Gastrocnemius medialis (tissue), 4 donors: ENCODE measurements at regions of chr18 and their contacts with region 1.

Region 1: GRCh38 chr18:47863041-47863440 is 67.4 kb downstream of the SMAD2 start:
- DNase-seq: peak; percentile 43 to 62
- ATAC-seq: peak; percentile 98
- H3K4me3 ChIP-seq: no peak overlapping the region
- H3K27ac ChIP-seq: peak overlapping the region; percentile 7 to 27 (median 12)
- H3K4me1 ChIP-seq: peaks cover 28 to 31% of the 10 kb centered on the region in 2 donors
- H3K27me3 ChIP-seq: no peaks in the 10 kb centered on the region
- CTCF ChIP-seq: no peak
- POLR2A ChIP-seq: no peak

Region 2: GRCh38 chr18:45993389-45993788 is 1869.7 kb before region 1 on chr18:
- in situ Hi-C with region 1: no loop called
- intact Hi-C with region 1: no loop called
- DNase-seq: no peak
- ATAC-seq: no peak
- H3K4me3 ChIP-seq: no peak overlapping the region
- H3K27ac ChIP-seq: no peak overlapping the region
- H3K4me1 ChIP-seq: no peaks in the 10 kb centered on the region
- H3K27me3 ChIP-seq: no peaks in the 10 kb centered on the region
- CTCF ChIP-seq: no peak
- POLR2A ChIP-seq: no peak

Region 3: GRCh38 chr18:47912343-47912742 is 49.3 kb after region 1 on chr18:
- in situ Hi-C with region 1: no loop called
- intact Hi-C with region 1: loop called (anchors 5 kb)
- DNase-seq: no peak
- ATAC-seq: peak; percentile 47 to 61
- H3K4me3 ChIP-seq: no peak overlapping the region
- H3K27ac ChIP-seq: peak overlapping the region; percentile 51 to 78 (median 66)
- H3K4me1 ChIP-seq: peaks cover 46 to 53% of the 10 kb centered on the region in 2 donors
- H3K27me3 ChIP-seq: no peaks in the 10 kb centered on the region
- CTCF ChIP-seq: no peak
- POLR2A ChIP-seq: no peak

Region 4: DNA sequence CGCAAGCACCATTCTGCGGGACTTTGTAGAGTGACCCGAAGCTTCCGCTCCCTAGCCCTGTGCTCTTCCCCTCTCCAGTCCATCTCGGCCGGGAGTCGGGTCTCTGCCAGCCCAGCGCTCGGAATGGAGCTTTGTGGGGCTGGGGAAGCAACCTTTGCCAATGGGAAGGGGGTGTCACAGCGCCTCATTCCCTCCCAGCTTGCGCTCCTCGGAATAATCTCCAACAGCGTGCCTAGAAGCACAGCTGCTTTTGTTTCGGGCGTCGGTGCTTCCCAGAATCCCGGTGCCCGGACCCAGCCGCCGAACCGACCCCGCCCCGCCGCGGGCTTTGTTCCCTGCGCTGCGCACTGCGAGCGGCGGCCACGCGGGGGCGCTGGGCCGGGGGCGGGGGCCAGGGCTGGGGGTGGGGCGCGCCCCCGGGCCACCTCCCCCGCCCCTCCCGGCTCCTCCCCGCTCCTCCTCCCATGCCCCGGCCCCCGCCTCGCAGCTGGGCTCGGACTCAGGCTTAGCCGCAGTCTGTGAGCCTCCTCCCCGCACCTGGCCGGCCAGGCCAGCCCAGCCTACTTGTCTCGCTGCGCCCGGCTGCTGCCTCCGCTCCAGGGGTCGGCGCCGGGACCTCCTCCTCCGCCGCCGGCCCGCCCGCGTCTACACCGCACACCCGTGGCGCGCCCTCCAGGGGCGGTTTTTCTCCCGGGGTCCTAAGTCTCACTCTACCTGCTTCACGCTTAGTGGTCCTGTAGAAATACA is 145.1 kb after region 1 on chr18:
- in situ Hi-C with region 1: no loop called
- intact Hi-C with region 1: loop called (anchors 10 kb)
- DNase-seq: peak in 1 of 2 donors; percentile 32
- ATAC-seq: peak; percentile 69 to 78
- H3K4me3 ChIP-seq: peak overlapping the region; percentile 51 to 91 (median 65)
- H3K27ac ChIP-seq: no peak overlapping the region
- H3K4me1 ChIP-seq: peaks cover 0 to 8% of the 10 kb centered on the region in 2 donors
- H3K27me3 ChIP-seq: no peaks in the 10 kb centered on the region
- CTCF ChIP-seq: peak in 4 of 5 experiments; percentile 21 to 88 (median 46)
- POLR2A ChIP-seq: no peak

Region 5: GRCh38 chr18:48053881-48054816 is 191.1 kb after region 1 on chr18:
- in situ Hi-C with region 1: no loop called
- intact Hi-C with region 1: no loop called
- DNase-seq: no peak
- ATAC-seq: no peak
- H3K4me3 ChIP-seq: no peak overlapping the region
- H3K27ac ChIP-seq: no peak overlapping the region
- H3K4me1 ChIP-seq: peaks cover under 1 to 1% of the 10 kb centered on the region in 2 donors
- H3K27me3 ChIP-seq: no peaks in the 10 kb centered on the region
- CTCF ChIP-seq: no peak
- POLR2A ChIP-seq: no peak

Region 6: DNA sequence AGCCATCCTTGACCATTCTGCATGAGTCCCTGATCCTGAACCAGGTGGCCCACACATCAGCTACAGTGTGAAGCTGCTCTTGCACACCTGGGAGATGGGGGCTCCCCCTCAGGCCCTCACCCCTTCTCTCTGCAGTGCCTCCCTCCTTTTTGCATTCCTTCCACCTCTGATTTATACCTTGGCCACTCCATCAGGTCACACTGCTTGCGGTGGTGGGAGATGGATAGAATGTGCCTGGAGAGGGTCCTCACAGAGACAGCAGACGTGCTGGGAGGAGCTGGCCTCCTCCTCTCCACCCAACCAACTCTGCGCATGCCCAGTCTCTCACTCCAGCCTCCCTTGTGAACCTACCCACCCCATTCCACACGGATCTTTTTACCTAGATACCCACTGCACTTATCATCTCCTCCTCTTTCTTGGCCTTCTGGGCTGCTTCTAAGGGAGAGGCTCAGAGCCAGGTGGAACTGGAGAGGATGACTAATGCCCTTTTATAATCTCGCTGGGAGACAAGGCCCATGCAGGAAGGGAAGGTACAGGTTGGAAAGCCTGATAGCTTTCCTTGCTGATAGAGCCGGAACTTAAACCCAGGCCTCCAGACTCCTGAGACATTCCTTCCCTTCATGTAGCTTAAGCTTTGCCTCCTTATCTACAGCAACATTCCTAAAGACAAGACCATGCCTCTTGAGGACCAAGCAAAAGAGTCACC is 341.1 kb after region 1 on chr18:
- in situ Hi-C with region 1: no loop called
- intact Hi-C with region 1: no loop called
- DNase-seq: no peak
- ATAC-seq: peak; percentile 26 to 30
- H3K4me3 ChIP-seq: no peak overlapping the region
- H3K27ac ChIP-seq: no peak overlapping the region
- H3K4me1 ChIP-seq: no peaks in the 10 kb centered on the region
- H3K27me3 ChIP-seq: no peaks in the 10 kb centered on the region
- CTCF ChIP-seq: no peak
- POLR2A ChIP-seq: no peak

Region 7: GRCh38 chr18:48545757-48546321 is 682.8 kb after region 1 on chr18:
- in situ Hi-C with region 1: no loop called
- intact Hi-C with region 1: loop called (anchors 5 kb)
- DNase-seq: peak; percentile 23 to 70
- ATAC-seq: peak in 1 of 2 donors; percentile 25
- H3K4me3 ChIP-seq: no peak overlapping the region
- H3K27ac ChIP-seq: peak overlapping the region; percentile 53 to 77 (median 72)
- H3K4me1 ChIP-seq: peaks cover 55 to 73% of the 10 kb centered on the region in 2 donors
- H3K27me3 ChIP-seq: no peaks in the 10 kb centered on the region
- CTCF ChIP-seq: no peak
- POLR2A ChIP-seq: no peak